Right ventricle myocardium inferior (tissue), 1 donor: ENCODE measurements at regions of chr6 and their contacts with region 1.

Region 1: GRCh38 chr6:108113557-108114519 is 39.3 kb upstream of the OSTM1 start:
- DNase-seq: peak; percentile 61
- ATAC-seq: no peak

Region 2: GRCh38 chr6:108174371-108175175 is 60.7 kb after region 1 on chr6:
- intact Hi-C with region 1: loop called (anchors 5 kb)
- DNase-seq: no peak
- ATAC-seq: no peak

Region 3: DNA sequence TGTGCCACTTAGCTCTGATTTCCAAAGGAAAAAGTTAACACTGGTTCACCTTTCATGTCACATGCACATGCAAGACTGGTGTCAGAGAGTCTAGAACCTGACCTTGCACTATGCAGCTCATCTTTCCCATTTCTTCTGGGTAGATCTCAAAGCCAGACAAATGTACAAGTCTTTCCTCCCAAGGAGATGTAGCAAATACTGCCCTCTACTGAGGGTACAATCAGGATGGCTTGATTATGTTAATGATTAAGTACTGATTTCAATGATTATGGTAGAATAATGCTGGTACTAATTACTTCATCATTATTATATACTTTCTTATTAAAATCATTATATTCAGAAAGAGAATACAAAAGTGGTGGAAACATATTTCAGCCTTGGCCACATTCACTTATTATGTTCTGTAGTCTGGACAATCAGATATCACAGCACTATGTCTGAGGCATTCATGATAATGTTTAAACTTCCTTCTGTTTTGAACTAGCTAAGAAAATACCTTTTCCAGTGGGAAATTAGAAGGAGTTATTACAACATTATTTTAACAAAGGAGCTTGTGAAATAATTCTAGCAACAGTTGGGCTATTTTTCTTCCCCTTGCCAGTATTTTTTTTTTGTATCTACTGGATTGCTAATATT is 378.4 kb after region 1 on chr6:
- intact Hi-C with region 1: loop called (anchors 5 kb)
- DNase-seq: no peak
- ATAC-seq: no peak

Region 4: GRCh38 chr6:108526739-108527174 is 412.9 kb after region 1 on chr6:
- intact Hi-C with region 1: loop called (anchors 1 kb)
- DNase-seq: no peak
- ATAC-seq: peak; percentile 39

Region 5: GRCh38 chr6:108635505-108636226 is 521.8 kb after region 1 on chr6:
- intact Hi-C with region 1: no loop called
- DNase-seq: no peak
- ATAC-seq: no peak